Activated CD8-positive, alpha-beta memory T cell treated with anti-CD3 and anti-CD28 coated beads, Interleukin-2, amount 10 ng/mL, durations not matched to agents 7 days and 5 days (primary cell): ENCODE measurements at regions of chr2 and their contacts with region 1.

Region 1: DNA sequence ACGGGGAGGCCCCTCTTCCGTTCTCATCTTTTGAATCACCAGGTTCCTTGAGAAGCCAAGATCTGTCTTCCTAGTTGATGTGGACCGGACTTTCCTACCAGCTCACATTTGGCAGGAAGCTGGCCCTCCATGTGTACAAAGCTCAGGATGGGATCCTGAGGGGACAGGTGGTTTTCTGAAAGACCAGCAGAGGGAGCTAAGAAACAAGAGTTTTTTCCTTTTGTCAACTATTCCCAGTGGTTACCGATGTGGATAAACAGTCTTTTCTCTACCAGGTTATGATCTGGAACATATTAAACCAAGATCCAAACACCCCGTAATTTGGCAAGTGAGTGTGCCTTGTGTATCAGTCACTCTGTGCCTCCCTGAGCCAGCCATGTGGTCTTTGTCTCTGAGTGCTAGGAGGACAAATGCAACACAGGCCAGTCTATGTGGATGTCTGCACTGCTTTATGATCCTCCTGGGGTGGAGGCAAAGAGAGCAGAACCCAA is 25.1 kb upstream of the ARHGAP25 start:
- DNase-seq: no peak
- ATAC-seq: peak; percentile 82
- H3K4me3 Mint-ChIP-seq: no peak overlapping the region
- H3K27ac Mint-ChIP-seq: peak overlapping the region; percentile 7
- H3K4me1 Mint-ChIP-seq: peaks cover 26% of the 10 kb centered on the region
- H3K27me3 Mint-ChIP-seq: peaks cover 2% of the 10 kb centered on the region

Region 2: DNA sequence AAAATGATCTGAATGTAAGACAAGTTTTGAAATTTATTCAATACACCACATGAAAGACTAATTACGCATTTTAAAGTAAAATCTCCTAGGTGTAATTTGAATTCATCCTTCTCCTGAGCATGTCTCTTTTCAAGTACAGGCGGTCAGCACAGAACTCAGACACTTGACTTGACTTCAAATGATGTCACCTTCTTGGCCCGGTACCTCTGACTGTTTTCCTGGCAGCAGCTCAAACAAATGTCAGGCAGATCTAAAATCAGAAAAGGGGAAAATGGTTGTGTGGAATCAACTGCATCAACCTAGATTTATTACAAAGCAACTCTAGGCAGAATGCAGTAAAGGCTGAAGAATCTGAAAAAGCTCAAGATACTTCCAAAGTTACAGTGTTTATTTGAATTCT is 77.4 kb before region 1 on chr2:
- CTCF ChIA-PET with region 1: no interaction called
- DNase-seq: no peak
- ATAC-seq: no peak
- H3K4me3 Mint-ChIP-seq: no peak overlapping the region
- H3K27ac Mint-ChIP-seq: no peak overlapping the region
- H3K4me1 Mint-ChIP-seq: no peaks in the 10 kb centered on the region
- H3K27me3 Mint-ChIP-seq: peaks cover 38% of the 10 kb centered on the region

Region 3: GRCh38 chr2:68721482-68722101 is 12.1 kb after region 1 on chr2:
- CTCF ChIA-PET with region 1: interaction called, 15 read pairs
- DNase-seq: peak; percentile 71
- ATAC-seq: peak; percentile 52
- H3K4me3 Mint-ChIP-seq: peak overlapping the region; percentile 46
- H3K27ac Mint-ChIP-seq: peak overlapping the region; percentile 87
- H3K4me1 Mint-ChIP-seq: peaks cover 97% of the 10 kb centered on the region
- H3K27me3 Mint-ChIP-seq: no peaks in the 10 kb centered on the region

Region 4: GRCh38 chr2:68742626-68743415 is 33.4 kb after region 1 on chr2:
- CTCF ChIA-PET with region 1: interaction called, 11 read pairs
- DNase-seq: peak; percentile 39
- ATAC-seq: no peak
- H3K4me3 Mint-ChIP-seq: peak overlapping the region; percentile 31
- H3K27ac Mint-ChIP-seq: peak overlapping the region; percentile 65
- H3K4me1 Mint-ChIP-seq: peaks cover 89% of the 10 kb centered on the region
- H3K27me3 Mint-ChIP-seq: no peaks in the 10 kb centered on the region

Region 5: GRCh38 chr2:68837164-68837860 is 127.8 kb after region 1 on chr2:
- CTCF ChIA-PET with region 1: interaction called, 11 read pairs
- DNase-seq: peak; percentile 77
- ATAC-seq: peak; percentile 64
- H3K4me3 Mint-ChIP-seq: no peak overlapping the region
- H3K27ac Mint-ChIP-seq: peak overlapping the region; percentile 83
- H3K4me1 Mint-ChIP-seq: peaks cover 36% of the 10 kb centered on the region
- H3K27me3 Mint-ChIP-seq: no peaks in the 10 kb centered on the region